CD8-positive, alpha-beta T cell (primary cell): ENCODE measurements at regions of chr4 and their contacts with region 1.

Region 1: GRCh38 chr4:83074086-83074704 is 39.2 kb downstream of the COPS4 start:
- DNase-seq: peak in 8 of 9 experiments; percentile 27 to 94 (median 62)
- ATAC-seq: peak; percentile 97
- H3K4me3 ChIP-seq: peak overlapping the region in 1 of 2 experiments; percentile 18
- H3K4me3 Mint-ChIP-seq: peak overlapping the region; percentile 78
- H3K27ac ChIP-seq: peak overlapping the region in 1 of 2 experiments; percentile 2
- H3K27ac Mint-ChIP-seq: peak overlapping the region; percentile 83
- H3K4me1 ChIP-seq: peaks cover 3% of the 10 kb centered on the region
- H3K4me1 Mint-ChIP-seq: peaks cover 4% of the 10 kb centered on the region
- H3K27me3 ChIP-seq: no peaks in the 10 kb centered on the region
- H3K27me3 Mint-ChIP-seq: no peaks in the 10 kb centered on the region
- CTCF ChIP-seq: peak; percentile 83

Region 2: GRCh38 chr4:82462415-82462831 is 611.8 kb before region 1 on chr4:
- CTCF ChIA-PET with region 1: no interaction called
- POLR2A ChIA-PET with region 1: no interaction called
- intact Hi-C with region 1: loop called in 1 of 2 experiments (anchors 10 kb)
- DNase-seq: peak; percentile 68 to 88 (median 84)
- ATAC-seq: peak; percentile 98
- H3K4me3 ChIP-seq: no peak overlapping the region
- H3K4me3 Mint-ChIP-seq: no peak overlapping the region
- H3K27ac ChIP-seq: no peak overlapping the region
- H3K27ac Mint-ChIP-seq: peak overlapping the region; percentile 20
- H3K4me1 ChIP-seq: peaks cover 3% of the 10 kb centered on the region
- H3K4me1 Mint-ChIP-seq: peaks cover 3% of the 10 kb centered on the region
- H3K27me3 ChIP-seq: no peaks in the 10 kb centered on the region
- H3K27me3 Mint-ChIP-seq: no peaks in the 10 kb centered on the region
- CTCF ChIP-seq: peak; percentile 79

Region 3: GRCh38 chr4:83150653-83151330 is 76.6 kb after region 1 on chr4:
- CTCF ChIA-PET with region 1: interaction called, 25 read pairs
- POLR2A ChIA-PET with region 1: interaction called, 4 read pairs
- intact Hi-C with region 1: loop called (anchors 1 to 2 kb)
- DNase-seq: no peak
- ATAC-seq: no peak
- H3K4me3 ChIP-seq: no peak overlapping the region
- H3K4me3 Mint-ChIP-seq: no peak overlapping the region
- H3K27ac ChIP-seq: no peak overlapping the region
- H3K27ac Mint-ChIP-seq: no peak overlapping the region
- H3K4me1 ChIP-seq: peaks cover 10% of the 10 kb centered on the region
- H3K4me1 Mint-ChIP-seq: peaks cover 30% of the 10 kb centered on the region
- H3K27me3 ChIP-seq: no peaks in the 10 kb centered on the region
- H3K27me3 Mint-ChIP-seq: no peaks in the 10 kb centered on the region
- CTCF ChIP-seq: no peak

Region 4: DNA sequence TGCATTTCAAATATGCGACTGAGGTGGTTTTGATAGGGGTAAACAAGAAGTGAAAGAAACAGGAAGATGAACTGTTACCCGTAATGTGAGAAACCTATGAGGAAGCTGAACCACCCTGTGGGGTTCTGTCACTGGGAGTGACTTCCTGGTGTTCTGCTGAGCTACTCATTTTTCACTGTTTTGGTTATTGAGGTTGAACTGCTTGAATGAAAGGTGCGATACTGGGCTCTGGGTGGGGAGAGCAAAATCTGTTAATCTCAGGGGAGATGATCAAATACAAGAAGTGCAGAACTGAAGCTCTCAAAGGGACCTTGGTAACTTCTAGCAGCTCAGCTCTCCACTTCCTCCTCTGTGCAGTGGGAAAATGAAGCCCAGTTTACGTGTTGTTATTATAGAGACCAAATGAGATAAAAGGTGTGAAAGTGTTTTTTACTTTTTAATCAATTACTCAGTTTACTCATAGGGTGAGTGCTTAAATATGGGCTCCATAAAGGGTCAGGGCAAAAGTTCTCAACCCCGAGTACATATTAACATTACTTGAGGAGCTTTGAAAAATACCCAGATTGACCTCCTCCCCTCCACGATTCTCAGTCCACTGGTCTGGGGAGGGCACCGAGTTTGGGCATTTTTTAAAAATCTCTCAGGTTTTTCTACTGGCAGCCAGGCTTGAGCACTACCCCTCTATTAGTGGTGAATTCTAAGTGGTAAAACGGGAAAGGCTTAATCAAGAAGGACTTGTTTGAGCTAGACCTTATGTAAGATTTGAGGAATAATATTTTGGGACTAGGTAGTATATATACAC is 143.7 kb after region 1 on chr4:
- CTCF ChIA-PET with region 1: interaction called, 5 read pairs
- POLR2A ChIA-PET with region 1: interaction called, 3 read pairs
- intact Hi-C with region 1: loop called in 1 of 2 experiments (anchors 2 kb)
- DNase-seq: peak; percentile 35 to 94 (median 67)
- ATAC-seq: peak; percentile 93
- H3K4me3 ChIP-seq: no peak overlapping the region
- H3K4me3 Mint-ChIP-seq: peak overlapping the region; percentile 55
- H3K27ac ChIP-seq: peak overlapping the region; percentile 68 to 81
- H3K27ac Mint-ChIP-seq: peak overlapping the region; percentile 89
- H3K4me1 ChIP-seq: peaks cover 66% of the 10 kb centered on the region
- H3K4me1 Mint-ChIP-seq: peaks cover 74% of the 10 kb centered on the region
- H3K27me3 ChIP-seq: no peaks in the 10 kb centered on the region
- H3K27me3 Mint-ChIP-seq: no peaks in the 10 kb centered on the region
- CTCF ChIP-seq: no peak

Region 5: GRCh38 chr4:83259586-83259985 is 185.4 kb after region 1 on chr4:
- CTCF ChIA-PET with region 1: interaction called, 49 read pairs
- POLR2A ChIA-PET with region 1: interaction called, 5 read pairs
- intact Hi-C with region 1: loop called (anchors 1 kb)
- DNase-seq: no peak
- ATAC-seq: no peak
- H3K4me3 ChIP-seq: no peak overlapping the region
- H3K4me3 Mint-ChIP-seq: no peak overlapping the region
- H3K27ac ChIP-seq: no peak overlapping the region
- H3K27ac Mint-ChIP-seq: no peak overlapping the region
- H3K4me1 ChIP-seq: peaks cover 6% of the 10 kb centered on the region
- H3K4me1 Mint-ChIP-seq: peaks cover 13% of the 10 kb centered on the region
- H3K27me3 ChIP-seq: no peaks in the 10 kb centered on the region
- H3K27me3 Mint-ChIP-seq: no peaks in the 10 kb centered on the region
- CTCF ChIP-seq: no peak

Region 6: DNA sequence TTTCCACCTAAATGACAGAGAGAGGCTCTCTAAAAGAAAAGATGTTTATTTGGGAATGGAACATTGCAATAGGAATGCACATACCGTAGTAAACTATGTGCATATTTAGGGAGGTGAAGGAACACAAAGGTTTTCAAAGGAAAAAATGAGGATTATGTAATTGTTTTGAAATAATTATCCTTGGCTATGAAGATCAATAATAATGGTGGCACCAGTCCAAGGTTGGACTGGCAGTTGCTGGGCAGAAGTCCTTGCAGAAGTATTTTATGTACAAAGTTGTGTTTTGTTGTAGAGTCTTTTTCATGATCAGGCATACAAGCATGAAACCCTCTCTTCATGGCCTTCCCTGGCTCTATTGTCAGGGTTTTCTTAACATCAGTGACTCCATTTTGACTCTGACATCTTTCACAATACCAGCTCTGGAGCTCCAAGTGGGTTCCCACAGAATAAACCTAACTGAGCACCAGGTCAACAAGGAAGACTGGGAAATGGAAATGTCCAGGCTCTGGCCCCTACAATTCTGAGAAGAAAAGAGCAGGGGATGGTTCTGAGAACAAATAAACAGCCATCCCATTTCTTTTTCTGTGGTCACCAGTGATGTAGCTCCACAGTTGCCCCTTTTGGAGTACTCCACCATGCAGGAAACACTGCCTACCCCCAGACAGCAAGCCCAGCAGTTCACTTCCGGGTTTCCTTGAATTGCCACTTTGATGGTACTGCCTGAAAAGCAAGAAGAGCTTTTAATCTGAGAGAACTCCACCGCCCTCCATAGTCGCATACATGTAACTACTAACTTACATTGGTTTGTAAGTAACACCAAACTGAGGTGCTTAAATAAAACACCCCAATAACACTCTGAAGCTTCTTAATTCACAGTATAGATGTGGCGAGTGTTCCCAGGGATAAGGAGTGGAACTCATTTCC is 313.8 kb after region 1 on chr4:
- CTCF ChIA-PET with region 1: no interaction called
- POLR2A ChIA-PET with region 1: no interaction called
- intact Hi-C with region 1: loop called in 1 of 2 experiments (anchors 5 kb)
- DNase-seq: peak in 5 of 9 experiments; percentile 1 to 71 (median 45)
- ATAC-seq: peak; percentile 81
- H3K4me3 ChIP-seq: no peak overlapping the region
- H3K4me3 Mint-ChIP-seq: no peak overlapping the region
- H3K27ac ChIP-seq: no peak overlapping the region
- H3K27ac Mint-ChIP-seq: no peak overlapping the region
- H3K4me1 ChIP-seq: peaks cover 9% of the 10 kb centered on the region
- H3K4me1 Mint-ChIP-seq: peaks cover 14% of the 10 kb centered on the region
- H3K27me3 ChIP-seq: no peaks in the 10 kb centered on the region
- H3K27me3 Mint-ChIP-seq: no peaks in the 10 kb centered on the region
- CTCF ChIP-seq: no peak